Activated T-helper 1 cell treated with anti-CD3 and anti-CD28 coated beads, Interleukin-12 subunit alpha, Interleukin-12 subunit beta, Interleukin-2, Interleukin-4 antibody, amounts not matched to agents 30 ng/mL and 10 ng/mL and 1 ng/mL, durations not matched to agents 14 hours and 24 hours and 36 hours (primary cell): ENCODE measurements at regions of chr7 and their contacts with region 1.

Region 1: DNA sequence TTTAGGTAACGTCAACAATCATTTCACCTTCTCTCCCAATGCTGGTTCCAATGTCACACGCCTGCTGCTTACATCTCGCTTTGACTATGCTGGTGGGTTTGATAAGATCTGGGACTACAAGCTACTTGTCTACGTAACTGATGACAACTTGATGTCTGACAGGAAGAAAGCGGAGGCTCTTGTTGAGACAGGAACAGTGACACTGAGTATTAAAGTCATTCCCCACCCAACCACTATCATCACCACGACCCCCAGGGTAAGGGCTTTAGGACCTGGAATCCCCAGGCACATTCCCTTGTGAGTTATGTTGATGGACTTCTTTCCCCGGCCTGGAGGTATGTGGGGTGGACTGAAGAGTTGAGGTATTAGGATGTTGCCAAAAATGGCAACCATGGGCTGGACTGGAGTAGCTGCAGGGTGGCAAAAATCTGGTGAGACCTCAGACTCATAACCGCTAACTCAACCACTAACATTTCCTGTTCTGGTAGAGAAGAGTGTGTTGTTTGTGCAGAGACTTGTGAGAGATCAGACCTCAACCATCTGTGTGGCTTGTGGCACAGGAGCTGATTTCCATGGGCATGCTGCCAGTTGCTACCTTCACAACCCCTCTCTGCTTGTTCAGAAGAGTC is 59.2 kb downstream of the CDHR3 start:
- DNase-seq: peak; percentile 56
- H3K4me3 Mint-ChIP-seq: peak overlapping the region; percentile 37
- H3K27ac Mint-ChIP-seq: peak overlapping the region; percentile 77
- H3K4me1 Mint-ChIP-seq: peaks cover 49% of the 10 kb centered on the region
- H3K27me3 Mint-ChIP-seq: peaks cover 13% of the 10 kb centered on the region

Region 2: GRCh38 chr7:105678811-105679495 is 343.4 kb before region 1 on chr7:
- intact Hi-C with region 1: loop called (anchors 1 kb)
- DNase-seq: no peak
- H3K4me3 Mint-ChIP-seq: peak overlapping the region; percentile 89
- H3K27ac Mint-ChIP-seq: peak overlapping the region; percentile 93
- H3K4me1 Mint-ChIP-seq: peaks cover 57% of the 10 kb centered on the region
- H3K27me3 Mint-ChIP-seq: peaks cover 1% of the 10 kb centered on the region

Region 3: GRCh38 chr7:105924945-105925344 is 97.4 kb before region 1 on chr7:
- intact Hi-C with region 1: loop called (anchors 5 kb)
- DNase-seq: no peak
- H3K4me3 Mint-ChIP-seq: no peak overlapping the region
- H3K27ac Mint-ChIP-seq: peak overlapping the region; percentile 56
- H3K4me1 Mint-ChIP-seq: peaks cover 18% of the 10 kb centered on the region
- H3K27me3 Mint-ChIP-seq: peaks cover 12% of the 10 kb centered on the region

Region 4: GRCh38 chr7:106041140-106041717 is 18.9 kb after region 1 on chr7:
- intact Hi-C with region 1: loop called (anchors 1 kb)
- DNase-seq: no peak
- H3K4me3 Mint-ChIP-seq: no peak overlapping the region
- H3K27ac Mint-ChIP-seq: no peak overlapping the region
- H3K4me1 Mint-ChIP-seq: peaks cover 15% of the 10 kb centered on the region
- H3K27me3 Mint-ChIP-seq: peaks cover 20% of the 10 kb centered on the region

Region 5: DNA sequence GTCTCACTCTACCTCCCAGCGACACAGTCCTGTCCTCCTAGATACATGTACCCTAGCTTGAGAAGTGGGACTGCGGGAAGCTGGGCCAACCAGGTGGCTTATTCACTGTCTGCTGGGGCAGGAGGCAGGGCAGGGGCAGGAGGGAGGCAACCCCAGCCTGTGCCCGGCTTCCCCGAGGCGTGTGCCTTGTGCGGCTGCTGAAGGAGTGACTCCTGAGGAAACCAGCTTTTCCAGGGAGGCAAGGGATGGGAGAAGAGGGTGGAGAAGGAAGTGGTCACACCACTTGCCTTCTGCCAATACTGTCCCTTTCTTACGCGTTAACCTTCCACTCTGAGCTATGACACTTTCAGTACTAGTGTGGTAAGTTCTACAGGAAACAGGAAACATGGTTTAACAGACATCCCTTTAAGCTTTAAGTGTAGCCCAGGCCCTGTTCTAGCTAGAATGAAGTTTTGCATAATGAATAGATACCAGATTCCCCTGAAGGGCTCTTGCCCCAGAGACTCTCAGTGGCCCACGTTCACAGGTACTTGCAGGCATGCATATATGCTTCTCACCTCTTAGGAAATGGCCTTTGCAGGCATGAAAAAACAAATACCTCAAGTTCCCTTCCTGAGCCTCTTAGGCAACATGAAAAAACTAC is 49.2 kb after region 1 on chr7:
- intact Hi-C with region 1: loop called (anchors 1 kb)
- DNase-seq: peak; percentile 44
- H3K4me3 Mint-ChIP-seq: peak overlapping the region; percentile 59
- H3K27ac Mint-ChIP-seq: peak overlapping the region; percentile 93
- H3K4me1 Mint-ChIP-seq: peaks cover 42% of the 10 kb centered on the region
- H3K27me3 Mint-ChIP-seq: no peaks in the 10 kb centered on the region